ENCODE measurements at regions of chr5 and their contacts with region 1.

Region 1: DNA sequence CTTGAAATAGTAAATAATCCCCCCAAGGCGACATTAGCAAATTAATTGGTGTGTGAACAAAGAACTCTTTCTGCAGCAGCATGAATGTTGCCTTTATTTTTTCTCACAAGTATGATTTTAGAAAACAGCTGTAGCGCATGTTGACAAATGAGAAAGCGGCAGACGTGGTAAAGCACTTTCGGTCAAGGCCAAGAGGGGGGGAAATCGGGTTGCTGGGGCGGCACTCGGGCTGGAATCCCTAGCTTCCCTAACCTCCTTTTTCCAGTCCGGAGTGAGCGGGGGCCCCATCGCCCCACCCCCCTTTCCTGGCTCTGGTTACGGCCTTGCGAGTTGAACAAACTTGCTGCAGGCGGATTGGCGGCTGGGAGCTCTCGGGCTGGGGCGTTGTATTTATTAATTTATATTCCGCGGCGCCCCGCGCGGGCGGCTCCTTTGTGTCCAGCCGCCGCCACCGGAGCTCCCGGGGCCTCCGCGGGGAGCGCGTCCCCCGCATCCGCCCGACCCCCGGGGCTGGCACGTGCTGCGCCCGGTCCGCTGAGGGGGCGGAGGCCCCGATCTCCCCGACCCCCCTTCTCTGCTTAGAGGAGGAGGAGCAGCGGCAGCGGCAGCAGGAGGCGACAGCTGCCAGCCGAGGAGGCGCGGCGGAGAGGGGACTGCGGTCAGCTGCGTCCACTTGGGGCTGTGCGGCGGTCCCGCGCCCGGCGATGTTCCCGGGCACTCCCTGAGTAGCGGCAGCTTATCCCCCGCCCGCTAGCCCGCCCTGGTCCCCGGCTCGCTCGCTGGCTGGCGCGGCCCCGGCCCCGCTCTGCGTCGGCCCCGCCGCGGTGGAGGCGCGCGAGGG is at the start of gene RHOBTB3:
- DNase-seq: peak; percentile 76
- ATAC-seq: peak; percentile 68
- H3K4me3 ChIP-seq: peak within 1 kb of the TSS; percentile 90
- H3K27ac ChIP-seq: no peak within 1 kb of the TSS
- H3K4me1 ChIP-seq: peaks cover 34% of the 10 kb centered on the region
- H3K27me3 ChIP-seq: no peaks in the 10 kb centered on the region
- CTCF ChIP-seq: no peak
- total RNA-seq, gene RHOBTB3: 14.2 and 16.3 TPM in 2 replicates

Region 2: DNA sequence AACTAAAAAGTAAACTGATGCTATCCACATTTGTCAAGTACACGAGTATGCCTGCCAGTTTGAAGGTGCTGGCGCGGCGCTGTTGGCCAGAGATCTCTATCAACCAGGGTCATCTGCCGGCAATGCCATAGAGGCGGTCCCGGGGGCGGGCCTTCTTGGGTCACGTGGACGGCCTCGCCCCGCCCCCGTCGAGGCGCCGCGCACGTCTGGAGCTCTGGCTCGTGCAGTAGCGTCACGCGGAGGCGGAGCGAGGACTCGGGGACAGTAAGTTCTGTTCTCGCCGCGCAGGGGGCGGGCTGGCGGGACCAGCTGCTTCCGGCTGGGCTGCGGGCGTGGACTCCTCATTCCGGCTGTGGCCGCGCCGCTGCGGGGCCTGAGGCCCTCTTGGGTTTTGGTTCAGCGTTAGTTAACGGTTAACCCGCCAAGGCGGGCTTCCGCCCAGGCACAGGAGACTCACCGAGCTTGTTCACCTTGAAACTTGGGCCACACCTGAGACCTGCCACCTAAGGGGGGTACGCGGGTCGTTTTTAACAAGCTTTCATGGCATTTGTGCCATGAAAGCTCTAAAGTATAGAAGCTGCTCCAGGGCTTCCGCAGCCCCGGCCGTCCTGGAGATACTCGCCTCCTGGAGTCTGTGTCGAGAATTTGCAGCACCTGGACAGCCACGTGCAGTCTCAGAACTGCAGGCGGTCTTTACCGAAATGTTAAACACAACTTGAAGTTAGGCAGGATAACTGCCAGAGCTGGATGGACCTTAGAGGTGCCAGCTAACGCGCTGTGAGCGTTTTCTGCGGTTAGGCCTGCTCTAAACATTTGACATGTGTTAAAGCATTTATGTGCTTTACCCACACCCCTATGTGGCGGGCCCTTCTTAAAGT is 84.2 kb before region 1 on chr5 and contains the start of gene RFESD:
- CTCF ChIA-PET with region 1: interaction called, 4 read pairs
- POLR2A ChIA-PET with region 1: interaction called, 17 read pairs
- intact Hi-C with region 1: no loop called
- DNase-seq: peak; percentile 98
- ATAC-seq: peak; percentile 95
- H3K4me3 ChIP-seq: peak within 1 kb of the TSS; percentile 74
- H3K27ac ChIP-seq: peak within 1 kb of the TSS; percentile 64
- H3K4me1 ChIP-seq: peaks cover 12% of the 10 kb centered on the region
- H3K27me3 ChIP-seq: no peaks in the 10 kb centered on the region
- CTCF ChIP-seq: peak; percentile 22; the same call in 1 of the 2 replicates
- total RNA-seq, gene RFESD: 0.36 and 2.4 TPM in 2 replicates

Region 3: GRCh38 chr5:95712347-95712958 is 18.5 kb before region 1 on chr5:
- CTCF ChIA-PET with region 1: no interaction called
- POLR2A ChIA-PET with region 1: no interaction called
- intact Hi-C with region 1: loop called (anchors 2 kb)
- DNase-seq: peak; percentile 94
- ATAC-seq: peak; percentile 97
- H3K4me3 ChIP-seq: no peak overlapping the region
- H3K27ac ChIP-seq: peak overlapping the region; percentile 45
- H3K4me1 ChIP-seq: peaks cover 24% of the 10 kb centered on the region
- H3K27me3 ChIP-seq: no peaks in the 10 kb centered on the region
- CTCF ChIP-seq: no peak

Region 4: DNA sequence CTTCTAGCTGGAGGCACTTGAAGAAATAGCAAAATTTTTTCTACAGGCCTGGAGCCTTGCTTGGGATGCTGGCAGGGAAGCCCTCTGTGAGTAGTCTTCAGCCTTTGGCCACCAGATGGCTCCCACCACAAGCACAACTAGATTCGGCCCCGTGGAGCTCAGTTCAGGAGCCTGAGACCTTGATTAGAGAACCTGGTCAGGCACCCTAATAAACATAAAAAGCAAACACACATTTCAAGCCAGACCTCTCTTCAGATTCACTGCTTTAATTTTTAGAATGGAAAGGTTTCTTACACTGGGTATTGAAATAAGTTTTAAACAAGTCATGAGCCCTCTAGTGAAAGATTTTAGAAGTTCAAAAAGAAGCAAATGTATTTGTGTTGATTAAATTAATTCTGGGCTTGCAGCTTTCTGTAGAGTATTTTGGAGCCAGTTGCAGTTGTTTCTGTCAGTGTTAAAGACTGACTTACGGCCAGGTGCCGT is 50.2 kb after region 1 on chr5:
- CTCF ChIA-PET with region 1: interaction called, 3 read pairs
- POLR2A ChIA-PET with region 1: no interaction called
- intact Hi-C with region 1: loop called (anchors 2 kb)
- DNase-seq: peak; percentile 73
- ATAC-seq: peak; percentile 100
- H3K4me3 ChIP-seq: no peak overlapping the region
- H3K27ac ChIP-seq: no peak overlapping the region
- H3K4me1 ChIP-seq: no peaks in the 10 kb centered on the region
- H3K27me3 ChIP-seq: no peaks in the 10 kb centered on the region
- CTCF ChIP-seq: peak; percentile 95

Measured in PC-3 (cell line).